ENCODE measurements at regions of chr2 and their contacts with region 1.

Region 1: GRCh38 chr2:224650815-224651439 is 65.2 kb downstream of the CCDC195 start:
- DNase-seq: peak; percentile 56
- ATAC-seq: peak; percentile 85
- H3K4me3 ChIP-seq: no peak overlapping the region
- H3K27ac ChIP-seq: no peak overlapping the region
- H3K4me1 ChIP-seq: no peaks in the 10 kb centered on the region
- H3K27me3 ChIP-seq: no peaks in the 10 kb centered on the region; the same call in 1 of the 2 replicates
- CTCF ChIP-seq: peak; percentile 77
- POLR2A ChIP-seq: no peak
- RAD21 ChIP-seq: peak; percentile 89

Region 2: DNA sequence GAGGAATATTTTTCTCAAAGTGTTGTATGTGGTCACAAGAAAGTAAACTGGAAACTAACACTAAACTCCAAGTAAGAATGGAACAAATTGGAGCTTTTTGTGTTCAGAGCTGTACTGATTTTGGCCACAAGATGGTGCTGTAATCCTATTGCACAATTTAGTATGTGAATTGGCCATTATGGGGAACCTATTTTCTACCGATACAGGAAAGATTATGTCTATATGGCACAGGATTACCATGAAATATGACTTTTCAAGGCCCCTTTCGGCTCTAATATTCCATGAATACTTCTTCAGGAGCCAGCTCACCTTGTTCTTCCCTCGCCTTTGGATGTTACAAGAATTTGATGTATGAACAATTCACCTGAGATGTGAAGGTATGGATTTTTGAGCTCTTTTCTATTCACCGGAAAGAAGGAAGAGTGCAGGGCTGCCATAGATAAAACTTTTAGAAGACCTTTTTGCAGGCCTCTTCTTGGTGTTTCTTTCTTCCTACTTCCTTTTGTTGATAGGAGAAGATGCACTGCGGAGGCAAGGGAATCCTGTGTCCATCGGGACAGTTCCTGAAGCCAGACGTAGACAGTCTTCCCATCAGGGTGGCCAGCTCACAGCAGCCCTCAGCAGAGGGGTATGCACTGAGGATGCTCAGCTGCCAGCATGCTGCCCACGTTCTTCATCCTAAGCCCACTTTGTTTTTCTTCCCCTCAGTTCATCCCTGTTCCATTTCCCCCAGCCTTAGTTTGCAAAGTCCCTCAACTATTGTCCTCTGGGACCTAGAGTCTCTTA is 680.4 kb before region 1 on chr2:
- CTCF ChIA-PET with region 1: no interaction called
- POLR2A ChIA-PET with region 1: no interaction called
- dilution Hi-C with region 1: no loop called
- in situ Hi-C with region 1: no loop called
- intact Hi-C with region 1: loop called (anchors 2 kb)
- DNase-seq: peak; percentile 67
- ATAC-seq: peak; percentile 80
- H3K4me3 ChIP-seq: no peak overlapping the region
- H3K27ac ChIP-seq: no peak overlapping the region
- H3K4me1 ChIP-seq: no peaks in the 10 kb centered on the region
- H3K27me3 ChIP-seq: no peaks in the 10 kb centered on the region
- CTCF ChIP-seq: peak; percentile 95
- POLR2A ChIP-seq: no peak
- RAD21 ChIP-seq: peak; percentile 92

Region 3: DNA sequence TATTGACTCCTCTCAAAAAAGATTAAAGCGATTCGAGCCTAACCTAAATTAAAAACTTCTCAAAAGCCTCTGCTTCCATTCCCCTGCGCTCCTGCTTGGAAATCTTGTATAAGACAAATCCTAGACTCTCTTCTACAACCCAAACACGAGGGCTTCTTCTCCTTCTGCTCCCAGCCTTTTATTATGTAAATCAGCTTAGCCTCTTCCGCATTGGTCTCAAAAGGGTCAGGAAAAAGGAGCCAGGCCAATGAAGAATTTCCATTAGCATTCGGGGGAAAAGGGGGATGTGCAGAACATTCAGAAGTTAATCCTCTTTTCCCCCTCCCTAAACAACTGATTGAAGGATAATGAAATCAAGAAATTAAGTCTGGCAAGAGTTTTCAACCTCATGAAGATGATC is 357.0 kb before region 1 on chr2:
- CTCF ChIA-PET with region 1: no interaction called
- POLR2A ChIA-PET with region 1: no interaction called
- dilution Hi-C with region 1: no loop called
- in situ Hi-C with region 1: no loop called
- intact Hi-C with region 1: loop called (anchors 5 kb)
- DNase-seq: no peak
- ATAC-seq: no peak
- H3K4me3 ChIP-seq: no peak overlapping the region
- H3K27ac ChIP-seq: no peak overlapping the region
- H3K4me1 ChIP-seq: no peaks in the 10 kb centered on the region
- H3K27me3 ChIP-seq: peaks cover 13% of the 10 kb centered on the region; the same call in 1 of the 2 replicates
- CTCF ChIP-seq: no peak
- POLR2A ChIP-seq: no peak
- RAD21 ChIP-seq: no peak

Region 4: GRCh38 chr2:224449212-224450147 is 201.4 kb before region 1 on chr2:
- CTCF ChIA-PET with region 1: interaction called, 3 read pairs
- POLR2A ChIA-PET with region 1: no interaction called
- dilution Hi-C with region 1: no loop called
- in situ Hi-C with region 1: no loop called
- intact Hi-C with region 1: loop called (anchors 10 kb)
- DNase-seq: no peak
- ATAC-seq: no peak
- H3K4me3 ChIP-seq: no peak overlapping the region
- H3K27ac ChIP-seq: no peak overlapping the region
- H3K4me1 ChIP-seq: no peaks in the 10 kb centered on the region
- H3K27me3 ChIP-seq: peaks cover 1% of the 10 kb centered on the region; the same call in 1 of the 2 replicates
- CTCF ChIP-seq: peak; percentile 49
- POLR2A ChIP-seq: no peak
- RAD21 ChIP-seq: peak; percentile 43; the same call in 1 of the 2 replicates

Region 5: DNA sequence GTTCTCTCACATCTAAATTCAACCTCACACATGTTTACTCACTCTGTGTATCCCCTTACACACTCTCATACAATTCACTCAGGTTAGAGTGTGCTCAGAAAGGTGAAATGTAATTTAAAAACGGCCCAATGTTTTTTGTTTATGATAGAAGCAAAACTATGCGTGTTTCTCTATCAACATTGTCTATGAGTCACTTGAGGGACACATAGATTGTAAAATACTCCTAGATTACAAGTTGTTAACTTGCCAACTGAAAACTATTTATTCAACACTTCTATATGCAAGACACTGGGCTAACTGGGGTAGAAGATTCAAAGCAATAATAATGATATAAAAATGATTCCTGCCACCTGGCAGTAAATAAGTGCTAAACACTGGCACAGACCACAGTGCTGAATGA is 40.6 kb after region 1 on chr2:
- CTCF ChIA-PET with region 1: interaction called, 12 read pairs
- POLR2A ChIA-PET with region 1: no interaction called
- dilution Hi-C with region 1: no loop called
- in situ Hi-C with region 1: no loop called
- intact Hi-C with region 1: no loop called
- DNase-seq: peak; percentile 11
- ATAC-seq: peak; percentile 21; the same call in 1 of the 2 replicates
- H3K4me3 ChIP-seq: no peak overlapping the region
- H3K27ac ChIP-seq: no peak overlapping the region
- H3K4me1 ChIP-seq: no peaks in the 10 kb centered on the region
- H3K27me3 ChIP-seq: peaks cover 8% of the 10 kb centered on the region; the same call in 1 of the 2 replicates
- CTCF ChIP-seq: no peak
- POLR2A ChIP-seq: no peak
- RAD21 ChIP-seq: no peak

Region 6: DNA sequence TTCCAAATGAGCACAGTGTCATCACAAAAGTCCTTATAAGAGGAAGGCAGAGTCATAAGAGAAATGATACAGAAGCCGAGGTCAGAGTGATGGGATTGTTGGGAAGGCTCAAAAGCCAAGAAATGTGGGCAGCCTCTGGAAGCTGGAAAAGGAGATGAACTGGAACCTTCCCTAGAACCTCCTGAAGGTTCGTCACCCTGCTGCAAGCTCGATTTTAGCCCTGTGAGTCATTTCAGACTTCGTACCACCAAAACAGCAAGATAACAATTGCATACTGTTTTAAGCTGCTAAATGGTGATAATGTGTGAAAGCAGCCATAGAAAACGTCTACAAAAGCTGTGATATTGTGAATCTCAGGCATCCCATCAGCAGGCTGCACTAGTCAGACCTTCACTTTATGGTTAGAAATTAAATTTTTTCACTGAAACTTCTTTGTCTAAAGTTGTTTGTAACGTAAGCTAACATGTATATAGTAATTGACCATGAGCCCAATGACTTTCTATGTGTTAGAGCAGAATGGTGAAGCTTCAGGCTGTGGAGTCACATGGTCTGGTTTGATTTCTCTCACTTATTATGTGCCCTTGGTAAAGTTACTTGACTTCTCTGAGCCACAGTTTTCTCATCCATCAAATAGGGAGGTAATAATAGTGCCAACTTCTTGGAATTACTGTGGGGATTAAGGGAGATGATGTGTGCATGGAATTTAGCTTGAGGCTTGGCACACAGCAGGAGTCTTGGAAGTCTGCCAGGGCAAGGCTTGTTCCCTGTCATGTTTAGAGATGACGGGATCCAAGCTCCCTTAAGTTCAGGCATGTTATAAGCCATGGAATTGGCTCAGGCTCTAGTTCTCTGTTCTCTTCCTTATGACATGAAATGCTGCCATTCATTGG is 197.3 kb after region 1 on chr2:
- CTCF ChIA-PET with region 1: no interaction called
- POLR2A ChIA-PET with region 1: no interaction called
- dilution Hi-C with region 1: no loop called
- in situ Hi-C with region 1: no loop called
- intact Hi-C with region 1: no loop called
- DNase-seq: peak; percentile 75
- ATAC-seq: no peak
- H3K4me3 ChIP-seq: no peak overlapping the region
- H3K27ac ChIP-seq: no peak overlapping the region
- H3K4me1 ChIP-seq: no peaks in the 10 kb centered on the region; the same call in 1 of the 2 replicates
- H3K27me3 ChIP-seq: no peaks in the 10 kb centered on the region
- CTCF ChIP-seq: no peak
- POLR2A ChIP-seq: no peak
- RAD21 ChIP-seq: no peak

Region 7: DNA sequence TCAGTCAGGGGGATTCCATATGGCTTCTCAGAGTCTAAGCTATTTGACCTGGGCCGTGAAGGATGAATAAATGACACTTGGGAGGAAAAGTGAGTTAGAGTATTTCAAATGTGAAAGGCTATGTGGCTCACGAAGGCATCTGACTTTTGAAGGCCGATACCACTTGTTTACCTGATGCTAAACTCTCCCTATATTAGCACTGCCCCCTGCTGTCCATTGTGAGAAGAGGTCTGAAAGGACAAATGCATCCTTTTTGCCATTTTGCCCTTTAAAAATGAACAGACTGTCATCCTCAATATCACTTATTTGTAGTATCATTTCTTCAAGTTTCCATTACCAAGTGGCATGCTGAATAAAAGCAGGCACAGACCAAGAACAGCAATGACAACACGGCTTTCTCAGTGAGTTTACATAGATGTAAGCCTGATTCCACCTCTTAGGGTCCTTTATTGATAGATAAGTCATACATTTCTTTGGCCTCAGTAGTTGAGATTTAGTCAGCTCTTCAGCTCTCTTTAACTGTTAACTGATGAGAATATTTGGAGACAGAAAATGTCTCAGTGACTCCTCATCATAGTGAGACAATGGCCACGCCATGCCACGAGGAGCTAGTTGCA is 351.2 kb after region 1 on chr2:
- CTCF ChIA-PET with region 1: no interaction called
- POLR2A ChIA-PET with region 1: no interaction called
- dilution Hi-C with region 1: no loop called
- in situ Hi-C with region 1: no loop called
- intact Hi-C with region 1: loop called (anchors 5 kb)
- DNase-seq: peak; percentile 78
- ATAC-seq: peak; percentile 74
- H3K4me3 ChIP-seq: no peak overlapping the region
- H3K27ac ChIP-seq: peak overlapping the region; percentile 20; the same call in 1 of the 2 replicates
- H3K4me1 ChIP-seq: peaks cover 9% of the 10 kb centered on the region
- H3K27me3 ChIP-seq: no peaks in the 10 kb centered on the region
- CTCF ChIP-seq: peak; percentile 88
- POLR2A ChIP-seq: no peak
- RAD21 ChIP-seq: peak; percentile 92

Measured in IMR-90 (cell line).